HCT116 (cell line): ENCODE measurements at regions of chr19 and their contacts with region 1.

Region 1: DNA sequence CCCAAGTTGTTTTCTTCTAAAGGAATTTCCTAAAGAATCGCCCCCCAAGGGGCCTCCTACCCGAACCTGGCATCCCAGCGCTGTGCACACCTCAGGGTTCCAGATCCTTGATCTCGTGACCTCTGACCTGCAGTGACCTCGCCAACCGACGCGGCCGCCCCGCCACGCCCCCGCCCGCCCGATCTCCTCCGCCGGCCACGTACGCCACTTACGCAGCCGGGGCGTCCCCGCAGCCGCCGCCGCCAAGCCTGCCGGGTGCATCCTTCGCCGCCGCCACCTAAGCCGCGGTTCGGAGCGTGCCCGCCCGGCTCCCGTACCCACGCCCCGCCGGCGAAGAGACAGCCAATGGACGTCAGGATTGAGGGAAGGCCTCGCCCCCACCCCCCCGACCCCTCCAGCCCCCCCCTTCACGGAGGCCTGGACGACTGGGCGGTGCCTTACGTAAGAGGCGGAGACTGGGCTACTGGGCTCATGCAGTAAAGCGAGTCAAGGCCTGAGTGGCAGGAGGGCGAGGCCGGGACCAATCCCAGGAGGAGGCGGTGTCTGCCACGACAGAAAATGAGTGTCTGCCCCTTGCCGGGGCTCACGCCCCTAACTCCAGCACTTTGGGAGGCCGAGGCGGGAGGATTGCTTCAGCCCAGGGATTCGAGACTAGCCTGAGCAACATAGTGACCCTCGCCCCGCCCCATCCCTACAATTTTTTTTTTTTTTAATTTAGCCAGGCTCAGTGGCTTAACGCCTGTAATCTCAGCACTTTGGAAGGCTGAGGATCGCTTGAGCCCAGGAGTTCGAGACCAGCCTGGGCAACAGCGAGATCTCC is at the start of gene YIF1B:
- DNase-seq: peak; percentile 97
- ATAC-seq: peak; percentile 90
- H3K4me3 ChIP-seq: peak within 1 kb of the TSS; percentile 90 to 94
- H3K27ac ChIP-seq: peak within 1 kb of the TSS; percentile 81
- H3K4me1 ChIP-seq: peaks cover 15 to 39% of the 10 kb centered on the region in 2 experiments
- H3K27me3 ChIP-seq: no peaks in the 10 kb centered on the region
- CTCF ChIP-seq: no peak
- POLR2A ChIP-seq: no peak
- RAD21 ChIP-seq: no peak
- total RNA-seq, gene YIF1B: 67.5 TPM

Region 2: GRCh38 chr19:37977992-37978391 is 337.9 kb before region 1 on chr19:
- CTCF ChIA-PET with region 1: no interaction called
- POLR2A ChIA-PET with region 1: no interaction called
- RAD21 ChIA-PET with region 1: no interaction called
- intact Hi-C with region 1: no loop called
- DNase-seq: no peak
- ATAC-seq: no peak
- H3K4me3 ChIP-seq: no peak overlapping the region
- H3K27ac ChIP-seq: no peak overlapping the region
- H3K4me1 ChIP-seq: peaks cover 42 to 58% of the 10 kb centered on the region in 2 experiments
- H3K27me3 ChIP-seq: no peaks in the 10 kb centered on the region
- CTCF ChIP-seq: no peak
- POLR2A ChIP-seq: no peak
- RAD21 ChIP-seq: no peak

Region 3: GRCh38 chr19:38304866-38305429 is 10.9 kb before region 1 on chr19:
- CTCF ChIA-PET with region 1: no interaction called
- POLR2A ChIA-PET with region 1: interaction called, 10 read pairs
- RAD21 ChIA-PET with region 1: no interaction called
- intact Hi-C with region 1: loop called (anchors 1 kb)
- DNase-seq: peak; percentile 96
- ATAC-seq: peak; percentile 71
- H3K4me3 ChIP-seq: peak overlapping the region; percentile 91 to 98
- H3K27ac ChIP-seq: peak overlapping the region; percentile 98
- H3K4me1 ChIP-seq: peaks cover 36 to 51% of the 10 kb centered on the region in 2 experiments
- H3K27me3 ChIP-seq: no peaks in the 10 kb centered on the region
- CTCF ChIP-seq: no peak
- POLR2A ChIP-seq: peak; percentile 84
- RAD21 ChIP-seq: no peak